Mammary epithelial cell (primary cell): ENCODE measurements at regions of chr12 and their contacts with region 1.

Region 1: GRCh38 chr12:94987801-94988200 is 15.7 kb downstream of the NDUFA12 start:
- DNase-seq: no peak
- H3K4me3 ChIP-seq: no peak overlapping the region
- H3K27ac ChIP-seq: no peak overlapping the region
- H3K4me1 ChIP-seq: peaks cover 9% of the 10 kb centered on the region
- H3K27me3 ChIP-seq: no peaks in the 10 kb centered on the region
- CTCF ChIP-seq: no peak

Region 2: DNA sequence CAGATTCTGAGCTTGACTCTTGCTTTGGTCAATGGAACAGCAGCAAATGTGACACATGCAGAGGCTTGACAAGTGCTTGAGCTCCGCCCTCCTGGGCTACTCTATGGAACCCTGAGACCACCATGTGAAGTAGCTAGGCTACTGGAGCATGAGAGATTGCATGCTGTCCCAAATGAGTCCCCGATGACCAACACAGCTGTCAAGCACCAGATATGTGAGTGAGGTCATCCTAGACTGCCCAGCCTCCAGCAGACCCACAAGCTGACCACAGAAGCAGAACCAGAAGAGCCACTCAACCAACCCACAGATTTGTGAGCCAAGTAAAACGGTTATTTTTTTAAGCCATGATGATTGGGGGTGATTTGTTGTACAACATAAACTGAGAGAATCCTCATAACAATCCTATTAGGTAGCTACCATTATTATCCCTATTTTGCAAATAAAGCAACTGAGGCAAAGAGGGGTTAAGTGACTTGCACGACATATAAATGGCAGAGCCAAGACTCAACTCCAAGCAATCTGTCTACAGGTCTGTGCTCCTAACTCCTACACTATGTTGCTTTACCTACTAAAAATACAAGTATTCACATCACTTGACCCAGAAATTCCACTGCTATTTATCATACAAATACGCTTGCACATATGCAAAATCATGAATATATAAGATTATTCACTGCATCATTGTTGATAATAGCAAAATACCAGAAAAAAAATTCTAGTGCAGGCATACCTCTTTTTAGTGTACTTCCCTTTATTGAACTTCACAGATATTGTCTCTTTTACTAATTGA is 120.5 kb before region 1 on chr12:
- CTCF ChIA-PET with region 1: no interaction called
- dilution Hi-C with region 1: no loop called
- in situ Hi-C with region 1: no loop called
- intact Hi-C with region 1: no loop called
- DNase-seq: no peak
- H3K4me3 ChIP-seq: no peak overlapping the region
- H3K27ac ChIP-seq: no peak overlapping the region
- H3K4me1 ChIP-seq: no peaks in the 10 kb centered on the region
- H3K27me3 ChIP-seq: peaks cover 3% of the 10 kb centered on the region
- CTCF ChIP-seq: no peak

Region 3: DNA sequence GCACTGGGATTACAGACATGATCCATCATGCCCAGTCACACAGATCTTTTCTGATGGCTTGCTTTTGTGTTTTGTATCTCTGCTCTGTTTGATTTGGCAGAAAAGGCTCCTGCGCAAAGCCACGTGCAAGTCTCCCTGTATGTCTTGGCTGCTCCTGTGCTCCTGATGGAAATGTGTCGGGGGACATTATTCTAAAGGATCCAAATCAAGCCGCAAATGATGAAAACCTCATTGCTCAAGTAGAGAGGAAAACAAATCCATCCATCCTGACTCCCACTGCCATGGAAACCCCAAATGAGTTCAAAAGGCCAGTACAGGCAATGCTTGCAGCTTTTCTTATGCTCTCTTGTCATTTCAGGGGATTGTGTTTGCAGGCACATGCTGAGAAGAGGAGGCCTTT is 78.1 kb before region 1 on chr12:
- CTCF ChIA-PET with region 1: no interaction called
- dilution Hi-C with region 1: loop called (anchors 5 kb)
- in situ Hi-C with region 1: no loop called
- intact Hi-C with region 1: no loop called
- DNase-seq: no peak
- H3K4me3 ChIP-seq: no peak overlapping the region
- H3K27ac ChIP-seq: no peak overlapping the region
- H3K4me1 ChIP-seq: no peaks in the 10 kb centered on the region
- H3K27me3 ChIP-seq: no peaks in the 10 kb centered on the region
- CTCF ChIP-seq: no peak

Region 4: DNA sequence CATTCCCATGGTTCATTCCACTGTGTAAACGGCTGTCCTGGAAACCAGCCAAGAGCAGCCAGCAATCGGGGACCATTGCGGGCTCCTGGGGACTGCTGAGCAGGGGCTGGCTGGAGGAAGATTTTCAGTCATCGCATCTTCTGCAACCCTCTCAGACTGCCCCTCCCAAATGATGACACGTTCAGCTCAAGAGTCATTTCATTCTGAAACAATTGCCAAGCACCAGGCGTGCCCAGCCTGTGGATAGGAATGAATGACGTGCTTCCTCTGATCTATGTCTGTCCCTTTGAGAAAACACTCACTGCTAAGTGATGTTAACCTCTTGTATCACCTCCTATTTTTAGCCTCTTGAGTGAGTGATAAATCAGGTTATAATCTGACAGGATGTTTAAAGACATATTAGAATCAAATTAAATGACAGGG is 46.4 kb before region 1 on chr12:
- CTCF ChIA-PET with region 1: no interaction called
- dilution Hi-C with region 1: loop called (anchors 5 kb)
- in situ Hi-C with region 1: no loop called
- intact Hi-C with region 1: no loop called
- DNase-seq: peak; percentile 93
- H3K4me3 ChIP-seq: no peak overlapping the region
- H3K27ac ChIP-seq: peak overlapping the region; percentile 39
- H3K4me1 ChIP-seq: peaks cover 12% of the 10 kb centered on the region
- H3K27me3 ChIP-seq: no peaks in the 10 kb centered on the region
- CTCF ChIP-seq: no peak

Region 5: GRCh38 chr12:95003213-95003920 is 15.6 kb after region 1 on chr12 and contains the start of gene NDUFA12:
- CTCF ChIA-PET with region 1: interaction called, 4 read pairs
- dilution Hi-C with region 1: no loop called
- in situ Hi-C with region 1: no loop called
- intact Hi-C with region 1: loop called (anchors 1 kb)
- DNase-seq: peak; percentile 94
- H3K4me3 ChIP-seq: peak within 1 kb of the TSS; percentile 58 to 85 (median 84)
- H3K27ac ChIP-seq: peak within 1 kb of the TSS; percentile 86
- H3K4me1 ChIP-seq: no peaks in the 10 kb centered on the region
- H3K27me3 ChIP-seq: no peaks in the 10 kb centered on the region
- CTCF ChIP-seq: no peak
- total RNA-seq, gene NDUFA12: 64.0 to 115 TPM

Region 6: GRCh38 chr12:95158919-95159318 is 171.1 kb after region 1 on chr12:
- CTCF ChIA-PET with region 1: no interaction called
- dilution Hi-C with region 1: no loop called
- in situ Hi-C with region 1: no loop called
- intact Hi-C with region 1: no loop called
- DNase-seq: no peak
- H3K4me3 ChIP-seq: no peak overlapping the region
- H3K27ac ChIP-seq: no peak overlapping the region
- H3K4me1 ChIP-seq: no peaks in the 10 kb centered on the region
- H3K27me3 ChIP-seq: no peaks in the 10 kb centered on the region
- CTCF ChIP-seq: no peak